GM12878 (cell line): ENCODE measurements at regions of chr6 and their contacts with region 1.

Region 1: DNA sequence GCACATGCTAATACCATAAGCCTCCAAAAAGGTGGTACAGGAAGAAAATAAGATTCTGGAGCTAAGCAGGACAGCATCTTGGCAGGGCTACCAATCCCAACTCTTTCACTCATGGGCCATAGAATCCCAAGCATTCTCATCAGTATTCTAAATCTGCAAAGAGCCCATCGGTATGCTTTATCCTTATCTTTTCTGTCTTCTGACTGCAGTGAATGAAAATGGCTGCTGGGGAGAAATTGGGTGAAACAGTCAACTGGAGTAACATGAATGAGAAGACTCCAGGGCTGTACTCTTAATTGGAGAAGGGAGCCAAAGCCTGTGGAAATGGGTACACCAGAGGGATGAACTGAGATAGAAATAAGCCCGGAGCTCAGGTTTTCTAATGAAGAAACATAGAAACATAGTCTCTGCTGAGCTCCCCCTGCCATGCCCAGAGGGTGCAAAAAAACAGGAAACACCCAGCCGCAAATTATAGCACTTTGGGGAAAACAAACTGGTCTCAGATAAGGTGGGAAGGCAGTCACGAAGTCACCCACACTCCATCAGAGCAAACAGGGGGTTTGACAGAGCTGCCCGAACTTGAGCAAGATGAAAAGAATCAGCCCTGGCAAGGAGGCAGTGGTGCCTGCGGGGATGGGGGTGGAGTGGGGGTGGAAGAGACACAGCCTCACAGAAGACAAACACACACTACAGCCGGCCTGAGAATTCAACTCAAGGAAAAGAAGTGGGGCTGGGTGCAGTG is 35.4 kb upstream of the E2F3 start:
- DNase-seq: no peak
- ATAC-seq: peak; percentile 55
- H3K4me3 ChIP-seq: no peak overlapping the region
- H3K27ac ChIP-seq: no peak overlapping the region
- H3K4me1 ChIP-seq: no peaks in the 10 kb centered on the region
- H3K27me3 ChIP-seq: no peaks in the 10 kb centered on the region
- CTCF ChIP-seq: no peak
- EP300 ChIP-seq: no peak
- POLR2A ChIP-seq: no peak
- RAD21 ChIP-seq: no peak

Region 2: DNA sequence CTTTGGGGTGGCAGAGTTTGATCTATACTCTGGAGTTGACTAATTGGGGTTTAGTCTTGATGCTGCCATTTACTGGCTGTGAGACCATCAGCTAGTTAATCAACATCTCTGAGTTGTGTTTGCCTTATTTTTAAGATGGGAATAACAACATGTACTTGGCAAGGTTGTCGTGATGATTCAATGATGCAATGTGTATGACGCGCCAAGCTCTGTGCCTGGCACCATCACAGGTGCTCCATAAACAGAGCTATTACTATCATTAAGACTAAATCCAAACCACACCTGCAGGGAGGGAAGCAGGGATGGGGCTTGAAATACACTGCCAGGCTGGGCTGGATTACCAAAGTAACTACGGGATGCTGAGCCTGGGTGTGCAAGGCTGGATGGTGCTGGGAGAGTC is 24.7 kb before region 1 on chr6:
- CTCF ChIA-PET with region 1: no interaction called
- POLR2A ChIA-PET with region 1: no interaction called
- RAD21 ChIA-PET with region 1: interaction called, 3 read pairs
- SMC1A ChIA-PET with region 1: interaction called, 11 read pairs
- in situ Hi-C with region 1: no loop called
- intact Hi-C with region 1: no loop called
- DNase-seq: no peak
- ATAC-seq: no peak
- H3K4me3 ChIP-seq: no peak overlapping the region
- H3K27ac ChIP-seq: no peak overlapping the region
- H3K4me1 ChIP-seq: no peaks in the 10 kb centered on the region
- H3K27me3 ChIP-seq: no peaks in the 10 kb centered on the region
- CTCF ChIP-seq: no peak
- EP300 ChIP-seq: no peak
- POLR2A ChIP-seq: no peak
- RAD21 ChIP-seq: no peak